ENCODE measurements at regions of chr3 and their contacts with region 1.

Region 1: DNA sequence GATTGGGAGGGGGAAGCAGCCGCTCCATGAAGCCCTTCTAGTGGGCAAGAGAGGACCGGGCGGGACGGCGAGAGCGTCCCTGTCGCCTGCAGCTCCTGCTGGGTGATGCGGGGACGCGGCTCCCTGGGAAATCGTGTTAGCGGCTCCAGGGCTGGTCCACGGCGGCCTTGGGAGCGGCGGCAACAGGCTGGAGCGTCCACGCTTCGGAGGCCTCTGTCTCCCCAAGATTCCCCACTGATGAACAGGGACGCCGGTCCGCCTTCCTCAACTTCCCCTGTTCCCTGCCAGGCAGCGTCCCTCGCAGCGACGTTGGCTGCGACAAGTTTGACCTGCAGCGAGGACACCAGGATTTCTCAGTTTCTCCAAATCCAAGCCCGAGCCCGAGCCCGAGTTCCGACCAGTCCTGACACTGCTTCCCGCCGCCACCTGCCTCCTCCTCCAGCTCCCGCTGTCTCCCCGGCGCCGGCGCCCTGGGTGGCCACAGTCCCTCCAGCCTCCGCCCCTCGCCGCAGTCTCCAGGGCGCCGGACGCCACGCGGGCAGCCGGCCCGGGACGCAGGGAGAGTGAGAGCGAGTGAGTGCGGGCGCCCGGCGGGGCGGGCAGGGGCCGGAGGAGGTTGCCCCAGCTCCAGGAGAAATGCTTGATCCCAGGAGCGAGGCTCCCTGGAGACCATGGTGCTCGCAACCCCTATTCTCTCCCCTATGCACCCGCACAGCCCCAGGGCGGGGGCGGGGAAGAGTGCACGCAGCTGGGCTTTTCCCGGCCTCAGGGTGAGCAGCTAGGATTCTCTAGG is 78.1 kb upstream of the RNF7 start:
- DNase-seq: peak; percentile 90
- H3K4me3 ChIP-seq: peak overlapping the region; percentile 53 to 73 (median 58)
- H3K27ac ChIP-seq: peak overlapping the region; percentile 64 to 94 (median 88)
- H3K4me1 ChIP-seq: peaks cover 0 to 52% (median 42%) of the 10 kb centered on the region in 4 donors
- H3K27me3 ChIP-seq: no peaks in the 10 kb centered on the region
- CTCF ChIP-seq: no peak
- EP300 ChIP-seq: no peak
- POLR2A ChIP-seq: peak; percentile 73 to 83

Region 2: DNA sequence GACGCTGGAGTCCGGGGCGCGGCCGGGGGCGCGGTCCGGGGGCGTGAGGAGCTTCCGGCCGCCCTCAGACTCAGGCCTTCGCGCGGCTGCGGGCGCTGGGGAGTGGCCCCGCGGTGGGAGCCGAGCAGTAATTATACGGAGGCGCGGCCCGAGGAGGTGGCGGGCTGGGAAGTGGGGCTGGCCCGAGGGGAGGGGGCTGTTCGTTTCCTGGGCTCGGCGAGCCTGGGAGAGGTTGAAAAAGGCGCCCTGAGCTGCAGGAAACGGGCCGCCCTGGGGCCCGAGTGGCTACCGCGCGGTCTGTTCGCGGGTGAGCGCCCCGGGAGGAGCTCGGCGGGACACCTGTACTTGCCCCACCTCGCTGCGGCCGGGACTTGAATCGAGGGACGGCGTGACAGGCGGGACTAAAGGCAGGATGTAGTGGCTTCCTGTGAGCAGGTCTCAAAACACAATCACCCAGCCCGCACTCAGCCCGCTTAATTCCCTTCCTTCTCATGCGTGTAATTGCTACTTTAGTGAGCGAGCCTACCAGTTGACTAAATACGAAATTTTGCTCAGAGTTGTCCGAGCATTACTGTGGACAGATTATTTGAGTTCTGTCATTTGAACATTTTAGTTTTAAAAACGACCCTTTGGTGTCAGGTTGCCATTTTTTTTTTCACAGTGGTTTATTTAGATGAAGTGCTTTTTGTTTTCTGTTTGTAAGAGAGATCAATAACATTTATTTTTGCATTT is 172.3 kb before region 1 on chr3:
- intact Hi-C with region 1: loop called (anchors 10 kb)
- DNase-seq: peak; percentile 85
- H3K4me3 ChIP-seq: peak overlapping the region; percentile 60 to 97 (median 91)
- H3K27ac ChIP-seq: peak overlapping the region; percentile 92 to 98 (median 96)
- H3K4me1 ChIP-seq: peaks cover 0 to 24% (median 11%) of the 10 kb centered on the region in 4 donors
- H3K27me3 ChIP-seq: no peaks in the 10 kb centered on the region
- CTCF ChIP-seq: peak in 1 of 4 experiments; percentile 9
- EP300 ChIP-seq: no peak
- POLR2A ChIP-seq: peak in 1 of 2 donors; percentile 39

Region 3: DNA sequence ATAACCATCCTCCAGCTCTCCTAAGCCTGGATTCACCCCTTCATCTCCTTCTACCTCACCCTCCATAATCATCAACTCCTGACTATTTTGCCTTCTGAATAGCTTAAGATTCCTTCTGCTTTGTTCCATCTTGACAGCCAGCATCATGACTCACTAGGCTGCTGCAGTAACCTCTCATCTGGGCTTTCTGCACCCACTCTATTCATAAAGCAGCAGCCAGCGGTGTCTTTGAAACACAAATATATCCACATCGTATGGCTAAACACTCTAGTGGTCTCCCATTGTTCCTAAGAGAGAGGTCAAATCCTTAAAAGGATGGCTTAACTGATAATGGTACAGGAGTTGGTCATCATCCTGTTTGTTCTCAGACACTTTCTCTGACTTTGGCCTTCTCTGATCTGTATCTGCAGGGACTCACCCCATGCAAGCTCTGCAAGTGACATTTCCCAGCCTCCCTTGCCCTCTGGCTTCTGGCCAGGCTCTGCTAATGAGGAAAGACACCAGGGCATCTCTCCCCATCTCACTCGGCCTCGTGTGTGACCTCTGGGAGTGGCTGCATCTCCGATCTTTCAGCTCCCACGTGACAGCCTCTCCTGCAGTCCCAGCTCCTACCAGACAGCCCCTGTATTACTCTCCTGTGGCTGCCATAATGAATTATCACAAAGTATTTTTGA is 109.3 kb after region 1 on chr3:
- intact Hi-C with region 1: no loop called
- DNase-seq: no peak
- H3K4me3 ChIP-seq: no peak overlapping the region
- H3K27ac ChIP-seq: no peak overlapping the region
- H3K4me1 ChIP-seq: no peaks in the 10 kb centered on the region
- H3K27me3 ChIP-seq: no peaks in the 10 kb centered on the region
- CTCF ChIP-seq: no peak
- EP300 ChIP-seq: no peak
- POLR2A ChIP-seq: no peak

Region 4: GRCh38 chr3:142226484-142226883 is 566.5 kb after region 1 on chr3:
- intact Hi-C with region 1: loop called (anchors 10 kb)
- DNase-seq: no peak
- H3K4me3 ChIP-seq: no peak overlapping the region
- H3K27ac ChIP-seq: no peak overlapping the region
- H3K4me1 ChIP-seq: peaks cover 0 to 31% (median 25%) of the 10 kb centered on the region in 4 donors
- H3K27me3 ChIP-seq: no peaks in the 10 kb centered on the region
- CTCF ChIP-seq: no peak
- EP300 ChIP-seq: no peak
- POLR2A ChIP-seq: no peak